A549 (cell line): ENCODE measurements at regions of chr11 and their contacts with region 1.

Region 1: GRCh38 chr11:3854977-3855807 is at the start of gene STIM1:
- DNase-seq: peak; percentile 82 to 94
- ATAC-seq: peak; percentile 86 to 91
- H3K4me3 ChIP-seq: peak within 1 kb of the TSS; percentile 98
- H3K27ac ChIP-seq: peak within 1 kb of the TSS; percentile 98 to 99
- H3K4me1 ChIP-seq: peaks cover 49% of the 10 kb centered on the region
- CTCF ChIP-seq: peak; percentile 91
- EP300 ChIP-seq: no peak
- POLR2A ChIP-seq: peak; percentile 69
- RAD21 ChIP-seq: peak; percentile 73 to 85
- polyA plus RNA-seq, gene STIM1: 38.7 and 42.5 TPM in 2 replicates

Region 2: DNA sequence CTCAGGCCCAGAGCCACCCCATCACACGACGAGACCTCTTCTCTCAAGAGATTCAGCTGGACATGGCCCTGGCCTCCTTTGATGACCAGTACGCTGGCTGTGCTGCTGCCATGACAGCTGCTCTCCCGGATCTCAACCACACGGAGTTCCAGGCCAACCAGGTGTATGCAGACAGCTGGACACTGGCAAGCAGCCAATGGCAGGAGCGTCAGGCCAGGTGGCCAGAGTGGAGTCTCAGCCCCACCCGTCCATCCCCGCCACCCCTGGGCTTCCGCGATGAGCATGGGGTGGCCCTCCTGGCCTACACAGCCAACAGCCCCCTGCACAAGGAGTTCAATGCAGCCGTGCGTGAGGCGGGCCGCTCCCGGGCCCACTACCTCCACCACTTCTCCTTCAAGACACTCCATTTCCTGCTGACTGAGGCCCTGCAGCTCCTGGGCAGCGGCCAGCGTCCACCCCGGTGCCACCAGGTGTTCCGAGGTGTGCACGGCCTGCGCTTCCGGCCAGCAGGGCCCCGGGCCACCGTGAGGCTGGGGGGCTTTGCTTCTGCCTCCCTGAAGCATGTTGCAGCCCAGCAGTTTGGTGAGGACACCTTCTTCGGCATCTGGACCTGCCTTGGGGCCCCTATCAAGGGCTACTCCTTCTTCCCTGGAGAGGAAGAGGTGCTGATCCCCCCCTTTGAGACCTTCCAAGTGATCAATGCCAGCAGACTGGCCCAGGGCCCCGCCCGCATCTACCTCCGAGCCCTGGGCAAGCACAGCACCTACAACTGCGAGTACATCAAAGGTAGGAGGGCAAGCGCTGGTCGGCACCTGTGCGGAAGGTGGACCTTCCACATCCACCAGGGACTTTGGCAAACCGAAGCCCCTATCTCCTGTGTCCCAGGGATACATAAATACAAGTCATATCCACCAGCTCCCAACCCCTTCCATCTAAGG is 195.3 kb before region 1 on chr11:
- CTCF ChIA-PET with region 1: no interaction called
- POLR2A ChIA-PET with region 1: no interaction called
- DNase-seq: no peak
- ATAC-seq: peak in 1 of 2 experiments; percentile 10; a peak in 1 of 6 replicates
- H3K4me3 ChIP-seq: no peak overlapping the region
- H3K27ac ChIP-seq: no peak overlapping the region
- H3K4me1 ChIP-seq: no peaks in the 10 kb centered on the region
- CTCF ChIP-seq: no peak
- EP300 ChIP-seq: no peak
- POLR2A ChIP-seq: no peak
- RAD21 ChIP-seq: no peak

Region 3: GRCh38 chr11:3700410-3700809 is 154.8 kb before region 1 on chr11:
- CTCF ChIA-PET with region 1: no interaction called
- POLR2A ChIA-PET with region 1: no interaction called
- DNase-seq: no peak
- ATAC-seq: no peak
- H3K4me3 ChIP-seq: no peak overlapping the region
- H3K27ac ChIP-seq: no peak overlapping the region
- H3K4me1 ChIP-seq: no peaks in the 10 kb centered on the region
- CTCF ChIP-seq: no peak
- EP300 ChIP-seq: no peak
- POLR2A ChIP-seq: no peak
- RAD21 ChIP-seq: no peak

Region 4: DNA sequence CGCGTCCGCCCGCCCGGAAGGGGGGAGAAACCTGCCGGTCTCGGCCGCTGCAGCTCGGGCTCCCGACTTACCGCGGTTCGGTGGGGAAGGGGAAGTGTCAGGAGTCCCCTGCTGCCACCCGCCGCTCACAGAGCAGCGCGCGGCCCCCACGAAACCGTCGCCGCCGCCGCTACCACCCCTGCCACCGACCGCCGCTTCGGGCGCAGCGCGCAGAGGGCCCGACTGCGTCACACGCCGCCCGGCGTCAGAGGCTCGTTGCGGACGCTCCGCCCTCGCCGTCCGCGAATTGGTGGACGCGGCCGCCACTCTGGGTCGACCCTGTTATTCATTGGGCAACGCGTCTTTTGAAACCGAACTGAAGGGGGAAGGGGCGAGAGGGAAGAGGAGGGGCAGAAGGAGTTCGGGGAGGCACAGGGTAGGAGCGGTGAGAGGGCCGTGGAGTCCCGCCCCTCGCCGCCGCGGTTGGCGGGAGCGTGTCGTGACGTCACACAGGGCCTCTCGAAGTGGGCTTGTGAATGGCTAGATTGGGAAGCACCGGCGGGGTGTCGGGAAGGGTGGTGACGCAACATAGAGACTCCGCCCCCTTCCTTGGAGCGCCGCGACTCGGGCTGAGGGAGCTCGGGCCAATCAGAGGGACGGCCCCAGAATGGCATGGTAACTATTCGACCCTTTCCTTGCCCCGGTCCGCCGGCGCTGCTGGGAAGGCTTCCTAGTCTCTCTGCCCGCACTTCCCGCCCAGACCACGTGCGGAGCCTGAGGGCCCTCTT is 57.7 kb before region 1 on chr11 and contains the start of gene NUP98:
- CTCF ChIA-PET with region 1: no interaction called
- POLR2A ChIA-PET with region 1: no interaction called
- DNase-seq: peak; percentile 98 to 100
- ATAC-seq: peak; percentile 93 to 94
- H3K4me3 ChIP-seq: peak within 1 kb of the TSS; percentile 100
- H3K27ac ChIP-seq: peak within 1 kb of the TSS; percentile 95
- H3K4me1 ChIP-seq: peaks cover 29% of the 10 kb centered on the region
- CTCF ChIP-seq: no peak
- EP300 ChIP-seq: no peak
- POLR2A ChIP-seq: peak; percentile 95
- RAD21 ChIP-seq: no peak
- polyA plus RNA-seq, gene NUP98: 121 and 152 TPM in 2 replicates

Region 5: DNA sequence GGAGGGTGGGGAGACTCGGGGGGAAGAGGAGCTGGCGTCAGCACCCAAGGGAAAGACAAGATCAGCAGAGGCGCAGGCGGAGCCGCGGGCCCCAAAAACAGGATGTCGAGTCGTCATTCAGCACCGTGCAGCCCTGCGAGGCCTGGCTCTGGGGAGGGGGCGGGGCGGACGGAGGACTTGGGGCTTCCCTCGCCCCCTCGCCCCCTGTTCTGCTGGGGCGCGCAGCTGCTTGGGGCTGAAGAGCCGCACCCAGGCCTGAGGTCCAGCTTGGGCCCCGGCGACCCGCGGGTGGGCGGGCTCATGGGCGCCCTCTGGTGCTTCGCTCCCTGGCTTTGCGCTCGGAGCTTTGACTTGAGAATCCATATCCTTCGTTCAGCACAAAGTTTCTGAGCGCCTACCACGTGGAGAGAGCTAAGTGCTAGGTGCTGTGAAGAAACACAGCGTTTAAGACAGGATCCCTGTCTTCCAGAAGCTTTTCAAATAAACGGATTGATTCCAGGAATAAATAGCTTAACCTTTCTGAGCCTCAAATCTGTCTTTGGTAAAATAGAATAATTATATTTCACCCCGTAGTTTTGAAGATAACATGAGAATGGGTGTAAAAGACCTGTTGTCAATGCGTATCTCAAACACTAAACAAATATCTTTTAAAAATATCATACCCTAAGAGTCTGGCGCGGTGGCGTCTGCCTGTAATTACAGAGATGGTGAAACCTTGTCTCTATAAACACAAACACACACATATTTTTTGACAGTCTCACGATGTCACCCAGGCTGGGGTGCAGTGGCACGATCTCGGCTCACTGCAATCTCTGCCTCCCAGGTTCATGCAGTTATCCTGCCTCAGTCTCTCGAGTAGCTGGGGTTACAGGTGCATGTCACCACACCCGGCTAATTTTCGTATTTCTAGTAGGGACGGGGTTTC is 13.5 kb before region 1 on chr11:
- CTCF ChIA-PET with region 1: interaction called, 115 read pairs
- POLR2A ChIA-PET with region 1: interaction called, 44 read pairs
- DNase-seq: peak; percentile 80 to 93
- ATAC-seq: peak; percentile 70 to 86
- H3K4me3 ChIP-seq: peak overlapping the region; percentile 84
- H3K27ac ChIP-seq: peak overlapping the region; percentile 95 to 98
- H3K4me1 ChIP-seq: peaks cover 35% of the 10 kb centered on the region
- CTCF ChIP-seq: peak; percentile 88
- EP300 ChIP-seq: no peak
- POLR2A ChIP-seq: peak; percentile 42
- RAD21 ChIP-seq: peak; percentile 39 to 47

Region 6: DNA sequence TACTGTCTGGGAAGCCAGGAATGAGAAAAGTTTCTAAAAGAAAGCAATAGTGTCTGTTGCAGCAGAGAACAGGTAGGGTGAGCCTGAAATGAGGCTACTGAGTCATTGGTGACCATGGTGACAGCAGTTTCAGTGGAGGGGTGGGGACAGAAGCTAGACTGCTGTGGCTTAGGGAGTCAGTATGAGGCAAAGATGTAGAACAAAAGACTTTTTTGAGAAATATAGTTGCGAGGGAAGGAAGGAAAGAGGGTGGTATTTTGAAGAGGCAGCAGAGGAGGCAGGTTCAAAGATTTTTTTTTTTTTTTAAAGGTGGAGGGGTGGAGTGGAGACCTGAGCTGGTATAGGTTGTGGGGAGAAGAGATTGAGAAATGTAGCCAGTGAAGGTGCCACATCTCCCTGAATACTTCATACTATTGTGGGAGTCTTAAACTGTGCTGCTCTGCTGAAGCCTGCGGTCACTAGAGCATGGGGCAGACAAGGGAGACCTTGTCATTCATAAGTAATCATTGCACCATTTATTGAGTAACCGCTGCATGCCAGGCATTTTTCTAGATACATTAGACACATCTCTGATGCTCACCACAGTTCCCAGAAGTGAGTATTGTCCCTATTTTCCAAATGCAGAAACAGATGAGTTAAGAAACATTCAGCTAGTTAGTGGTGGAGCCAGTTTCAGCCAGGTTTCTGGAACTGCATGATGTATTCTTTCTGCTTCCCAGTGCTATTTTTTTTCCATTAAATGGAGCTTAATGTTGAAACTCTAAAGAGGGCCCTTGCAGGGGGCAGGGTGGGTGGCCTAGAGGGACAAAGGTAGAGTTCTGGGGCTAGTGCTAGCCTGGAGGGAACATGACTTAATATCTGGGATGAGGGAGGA is 50.1 kb after region 1 on chr11:
- CTCF ChIA-PET with region 1: interaction called, 22 read pairs
- POLR2A ChIA-PET with region 1: interaction called, 15 read pairs
- DNase-seq: peak; percentile 62 to 76
- ATAC-seq: peak; percentile 87 to 90
- H3K4me3 ChIP-seq: peak overlapping the region; percentile 8; the same call in 1 of the 3 replicates
- H3K27ac ChIP-seq: peak overlapping the region; percentile 65 to 87
- H3K4me1 ChIP-seq: peaks cover 57% of the 10 kb centered on the region
- CTCF ChIP-seq: no peak
- EP300 ChIP-seq: peak in 1 of 2 experiments; percentile 70; a peak in 1 of 5 replicates
- POLR2A ChIP-seq: no peak
- RAD21 ChIP-seq: peak in 1 of 2 experiments; percentile 23; a peak in 1 of 5 replicates

Region 7: DNA sequence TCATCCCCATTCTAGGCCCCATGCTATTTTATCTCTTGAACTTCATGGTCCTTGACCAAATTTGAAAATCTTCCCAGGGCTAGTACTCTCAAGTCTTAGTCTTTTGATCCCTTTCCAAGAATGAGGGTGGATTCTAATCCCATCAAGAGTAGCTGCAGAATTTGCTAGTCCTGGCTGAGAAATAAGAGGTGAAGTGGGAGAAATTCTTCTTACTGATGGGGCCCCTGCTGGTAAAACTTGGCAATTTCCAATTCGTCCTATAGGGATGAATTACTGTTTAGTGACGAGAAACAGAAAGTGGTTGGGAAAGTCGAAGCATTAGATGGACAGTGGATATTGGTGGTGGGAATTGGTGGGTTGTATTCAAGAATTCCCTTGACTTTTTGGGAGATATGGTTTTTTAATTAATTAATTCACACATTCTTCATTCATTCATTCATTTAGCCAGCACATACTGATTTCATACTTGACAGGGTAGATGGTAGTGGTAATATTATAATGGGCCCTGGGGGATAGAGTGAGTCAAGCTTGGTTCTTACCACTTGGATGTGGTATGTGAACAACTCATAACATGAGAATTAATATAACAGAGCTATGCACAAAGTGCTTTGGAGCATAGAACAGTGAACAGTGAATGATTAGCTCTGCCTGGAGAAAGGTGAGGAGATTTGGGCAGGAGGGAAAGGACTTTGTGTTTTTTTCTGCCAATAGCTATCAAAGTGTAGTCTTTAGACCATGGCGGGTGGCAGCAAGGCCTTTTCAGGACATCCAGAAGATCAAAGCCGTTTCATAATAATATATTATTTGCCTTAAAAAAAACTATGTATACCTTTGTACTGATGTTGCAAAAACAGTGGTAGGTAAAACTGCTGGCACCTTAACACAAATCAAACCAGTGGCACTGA is 104.1 kb after region 1 on chr11:
- CTCF ChIA-PET with region 1: interaction called, 36 read pairs
- POLR2A ChIA-PET with region 1: no interaction called
- DNase-seq: peak; percentile 53 to 54
- ATAC-seq: peak; percentile 89 to 92
- H3K4me3 ChIP-seq: 0 out of 3 replicates have a peak overlapping the region, but pooled peaks have one; percentile 7
- H3K27ac ChIP-seq: peak overlapping the region; percentile 40 to 51; a peak in 5 of 6 replicates
- H3K4me1 ChIP-seq: peaks cover 39% of the 10 kb centered on the region
- CTCF ChIP-seq: peak; percentile 34; the same call in 2 of the 3 replicates
- EP300 ChIP-seq: no peak
- POLR2A ChIP-seq: no peak
- RAD21 ChIP-seq: peak; percentile 16 to 45; a peak in 2 of 5 replicates

Region 8: DNA sequence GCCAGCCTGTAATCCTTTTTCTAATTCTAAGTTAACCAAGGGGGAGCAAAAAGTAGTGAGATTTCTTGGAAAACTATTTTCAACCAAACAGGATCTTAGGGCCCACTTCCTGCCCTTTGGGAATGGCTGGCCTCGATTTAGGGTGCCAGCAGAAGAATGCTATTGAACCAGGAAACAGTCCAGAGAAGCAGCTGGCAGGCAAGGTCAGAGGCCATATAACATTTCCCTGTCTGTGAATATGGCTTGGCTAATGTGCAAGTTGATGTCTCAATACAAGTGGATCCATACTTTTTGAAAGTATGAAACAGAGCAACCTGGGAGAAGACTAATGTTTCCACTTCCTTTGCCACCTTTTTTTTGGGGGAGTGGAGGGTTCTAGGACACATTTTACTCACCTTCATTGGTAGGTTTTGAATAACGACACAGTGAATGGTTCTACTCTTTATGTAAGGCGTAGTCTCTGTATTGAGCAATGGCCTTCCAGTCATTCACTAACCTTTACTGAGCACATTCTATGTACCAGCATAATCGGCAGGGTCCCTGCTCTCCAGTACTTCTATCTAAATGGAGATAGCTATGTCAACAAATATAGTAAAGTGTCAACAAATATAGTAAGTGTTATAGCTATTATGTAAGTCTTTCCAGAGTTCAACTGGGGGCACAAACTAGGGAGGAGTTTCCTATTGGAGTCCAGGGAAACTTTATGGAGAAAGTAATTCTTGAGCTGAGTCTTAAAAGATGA is 205.2 kb after region 1 on chr11:
- CTCF ChIA-PET with region 1: interaction called, 919 read pairs
- POLR2A ChIA-PET with region 1: interaction called, 3 read pairs
- DNase-seq: no peak
- ATAC-seq: no peak
- H3K4me3 ChIP-seq: no peak overlapping the region
- H3K27ac ChIP-seq: no peak overlapping the region
- H3K4me1 ChIP-seq: no peaks in the 10 kb centered on the region
- CTCF ChIP-seq: no peak
- EP300 ChIP-seq: no peak
- POLR2A ChIP-seq: no peak
- RAD21 ChIP-seq: no peak